ENCODE measurements at regions of chr10 and their contacts with region 1.

Region 1: DNA sequence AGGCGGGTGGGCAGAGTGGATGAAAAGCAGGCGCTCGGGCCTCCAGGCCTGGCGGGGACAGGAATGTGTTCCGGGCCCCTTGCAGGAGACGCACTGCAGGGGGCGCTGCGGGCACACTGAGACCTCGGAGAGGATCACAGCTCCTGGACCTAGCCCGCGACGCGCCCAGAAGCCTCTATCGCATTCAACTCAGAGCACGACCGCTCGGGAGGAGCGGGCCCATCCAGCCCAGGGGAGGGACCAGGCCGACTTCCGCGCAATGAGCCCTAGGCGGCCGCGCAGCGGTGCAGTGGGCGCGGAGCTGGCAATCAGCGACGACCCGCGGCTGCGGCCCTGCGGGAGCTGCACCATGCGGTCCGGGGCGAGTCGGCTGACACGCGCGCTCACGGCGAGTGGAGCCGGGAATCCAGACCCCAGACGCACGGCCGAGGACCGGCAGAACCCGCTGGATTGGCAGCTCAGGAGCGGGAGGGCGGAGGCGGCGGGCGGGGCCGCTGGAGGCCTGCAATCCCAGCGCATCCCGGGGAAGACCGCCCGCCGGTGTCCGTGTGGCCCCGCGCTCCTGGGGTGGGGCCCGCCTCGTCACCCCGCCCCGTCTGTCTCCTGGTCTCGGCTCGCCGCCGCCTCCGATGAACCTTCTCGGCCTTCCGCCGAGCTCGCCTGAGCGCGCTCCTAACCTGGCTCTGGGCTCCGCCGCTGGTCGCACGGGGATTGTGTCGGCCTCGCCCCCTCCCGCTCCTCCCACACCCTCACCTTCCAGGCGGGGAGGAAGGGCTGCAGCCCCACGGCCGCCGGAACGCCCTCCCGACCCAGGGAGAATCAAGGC is 33.5 kb upstream of the GRID1 start:
- DNase-seq: peak; percentile 93 to 95
- ATAC-seq: peak; percentile 93 to 96 (median 95)
- H3K4me3 ChIP-seq: peak overlapping the region; percentile 19 to 69 (median 64)
- H3K27ac ChIP-seq: peak overlapping the region in 8 of 10 donors; percentile 30 to 73 (median 68)
- H3K4me1 ChIP-seq: peaks cover 0 to 40% (median 34%) of the 10 kb centered on the region in 9 donors
- H3K27me3 ChIP-seq: peaks cover 0 to 41% (median 17%) of the 10 kb centered on the region in 7 donors
- CTCF ChIP-seq: peak; percentile 72 to 98 (median 95)

Region 2: GRCh38 chr10:86110156-86110786 is 289.8 kb before region 1 on chr10:
- intact Hi-C with region 1: no loop called
- DNase-seq: no peak
- ATAC-seq: no peak
- H3K4me3 ChIP-seq: no peak overlapping the region
- H3K27ac ChIP-seq: no peak overlapping the region
- H3K4me1 ChIP-seq: no peaks in the 10 kb centered on the region
- H3K27me3 ChIP-seq: peaks cover 0 to 6% (median 3%) of the 10 kb centered on the region in 7 donors
- CTCF ChIP-seq: peak in 1 of 9 donors; percentile 0

Region 3: DNA sequence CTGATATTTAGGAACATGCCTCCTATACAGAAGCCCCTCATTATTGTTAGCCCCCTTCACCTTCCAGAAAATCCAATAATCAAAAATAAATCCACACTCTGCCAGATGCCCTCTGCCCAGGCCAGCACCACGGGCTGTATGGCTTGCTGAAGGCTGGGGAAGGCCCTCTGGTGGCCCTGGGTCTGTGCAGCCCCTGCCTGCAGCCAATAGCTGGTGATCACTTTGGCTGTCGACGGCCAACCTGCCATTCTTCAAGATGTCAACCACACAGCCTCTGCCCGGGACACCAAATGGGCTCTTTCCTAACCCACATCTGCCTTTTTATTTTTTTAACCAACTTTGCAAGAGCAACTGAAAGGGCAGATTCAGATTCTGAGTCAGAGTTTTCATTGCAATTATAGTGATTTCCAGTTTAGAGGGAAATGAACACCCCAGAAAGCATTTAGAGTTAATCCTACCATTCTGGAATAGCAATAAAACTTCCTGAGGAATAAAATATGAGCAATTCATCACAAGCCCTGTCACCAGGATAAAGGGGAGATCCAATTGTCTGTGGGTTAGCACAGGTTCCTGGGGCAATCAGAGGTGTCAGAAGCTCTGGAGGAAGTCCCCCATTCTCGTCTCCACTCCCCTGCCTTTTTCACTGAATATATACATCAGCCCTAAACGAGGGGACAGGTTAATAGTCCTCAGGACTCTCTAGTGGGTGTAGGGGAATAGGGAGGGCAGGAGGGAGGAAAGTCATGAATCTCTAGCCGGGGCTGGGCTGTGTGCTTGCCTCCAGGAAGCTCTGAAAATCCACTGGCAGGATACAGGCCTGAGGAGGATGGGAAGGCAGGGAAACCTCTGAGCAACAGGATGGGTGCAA is 244.8 kb before region 1 on chr10:
- intact Hi-C with region 1: no loop called
- DNase-seq: no peak
- ATAC-seq: no peak
- H3K4me3 ChIP-seq: no peak overlapping the region
- H3K27ac ChIP-seq: no peak overlapping the region
- H3K4me1 ChIP-seq: no peaks in the 10 kb centered on the region
- H3K27me3 ChIP-seq: peaks cover 0 to 12% (median 0%) of the 10 kb centered on the region in 7 donors
- CTCF ChIP-seq: no peak

Region 4: DNA sequence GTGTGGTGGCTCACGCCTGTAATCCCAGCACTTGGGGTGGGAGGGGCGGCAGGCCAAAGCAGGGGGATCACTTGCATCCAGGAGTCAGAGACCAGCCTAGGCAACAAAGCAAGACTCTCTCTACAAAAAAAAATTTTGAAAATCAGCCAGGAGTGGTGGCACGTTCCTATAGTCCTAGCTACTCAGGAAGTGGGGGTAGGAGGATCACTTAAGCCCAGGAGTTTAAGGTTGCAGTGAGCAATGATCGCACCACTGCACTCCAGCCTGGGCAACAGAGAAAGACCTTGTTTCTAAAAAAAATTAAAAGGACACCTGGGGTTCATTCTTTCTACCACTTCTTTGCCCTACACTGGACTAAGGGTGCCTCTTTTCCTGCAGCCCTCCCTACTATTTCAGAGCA is 106.4 kb after region 1 on chr10:
- intact Hi-C with region 1: loop called in 1 of 10 experiments (anchors 10 kb)
- DNase-seq: no peak
- ATAC-seq: peak in 2 of 8 donors; percentile 13 to 14
- H3K4me3 ChIP-seq: no peak overlapping the region
- H3K27ac ChIP-seq: no peak overlapping the region
- H3K4me1 ChIP-seq: peaks cover 0 to 49% (median 26%) of the 10 kb centered on the region in 9 donors
- H3K27me3 ChIP-seq: no peaks in the 10 kb centered on the region
- CTCF ChIP-seq: no peak